Caco-2 (cell line): ENCODE measurements at regions of chr20 and their contacts with region 1.

Region 1: DNA sequence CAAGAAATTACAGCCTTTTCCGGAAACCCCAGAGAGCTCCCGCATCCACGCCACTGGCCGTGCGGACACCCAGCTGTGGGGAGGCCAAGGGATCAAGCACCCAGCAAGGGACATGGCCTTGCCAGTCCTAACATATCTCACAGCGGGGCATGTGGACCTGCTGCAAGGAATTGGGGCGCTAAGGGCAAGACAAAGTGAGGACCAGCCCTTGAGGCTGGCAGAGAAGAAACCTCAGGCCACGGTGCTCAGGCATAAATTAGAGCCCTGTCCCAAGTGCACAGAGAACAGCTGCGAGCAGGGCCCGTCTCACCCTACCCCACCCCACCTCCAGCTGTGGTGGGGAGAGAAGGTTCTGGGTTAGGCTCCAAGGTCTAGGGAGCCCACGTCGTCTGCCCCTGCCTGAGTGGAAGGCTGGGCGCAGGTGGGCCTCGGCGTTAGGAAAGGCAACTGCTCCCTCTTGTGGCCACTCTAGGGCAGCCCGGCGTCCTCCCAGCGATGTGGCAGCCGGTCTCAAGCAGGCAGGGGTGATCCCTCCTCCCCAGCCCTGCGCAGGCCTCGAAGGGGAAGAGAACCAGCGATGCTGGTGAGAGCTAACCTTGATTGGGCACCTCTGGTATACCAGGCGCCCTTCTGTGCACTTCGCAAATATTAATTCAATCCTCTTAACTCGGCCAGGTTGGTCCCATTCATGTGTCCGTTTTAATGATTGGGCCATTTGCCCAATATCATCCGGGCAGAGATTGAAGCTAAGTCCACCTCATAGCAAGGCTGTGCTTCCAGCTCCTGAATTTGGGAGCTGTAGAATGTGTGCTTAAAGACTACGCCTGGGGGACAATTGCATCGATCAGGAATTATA is 235.8 kb downstream of the NFATC2 start:
- DNase-seq: peak; percentile 86 to 91
- H3K4me3 ChIP-seq: no peak overlapping the region
- H3K4me3 Mint-ChIP-seq: no peak overlapping the region
- H3K27ac Mint-ChIP-seq: no peak overlapping the region
- H3K4me1 ChIP-seq: peaks cover 30% of the 10 kb centered on the region
- H3K4me1 Mint-ChIP-seq: peaks cover 27% of the 10 kb centered on the region
- H3K27me3 ChIP-seq: no peaks in the 10 kb centered on the region
- H3K27me3 Mint-ChIP-seq: no peaks in the 10 kb centered on the region
- CTCF ChIP-seq: peak; percentile 99

Region 2: GRCh38 chr20:50992733-50993457 is 313.8 kb before region 1 on chr20:
- CTCF ChIA-PET with region 1: interaction called, 108 read pairs
- POLR2A ChIA-PET with region 1: interaction called, 3 read pairs
- intact Hi-C with region 1: loop called (anchors 1 kb)
- DNase-seq: peak; percentile 88 to 91
- H3K4me3 ChIP-seq: no peak overlapping the region
- H3K4me3 Mint-ChIP-seq: no peak overlapping the region
- H3K27ac Mint-ChIP-seq: no peak overlapping the region
- H3K4me1 ChIP-seq: no peaks in the 10 kb centered on the region
- H3K4me1 Mint-ChIP-seq: peaks cover 16% of the 10 kb centered on the region
- H3K27me3 ChIP-seq: no peaks in the 10 kb centered on the region
- H3K27me3 Mint-ChIP-seq: peaks cover 10% of the 10 kb centered on the region
- CTCF ChIP-seq: peak; percentile 75 to 96

Region 3: GRCh38 chr20:51014797-51015722 is 291.7 kb before region 1 on chr20:
- CTCF ChIA-PET with region 1: interaction called, 7 read pairs
- POLR2A ChIA-PET with region 1: no interaction called
- intact Hi-C with region 1: loop called (anchors 1 kb)
- DNase-seq: peak; percentile 77 to 83
- H3K4me3 ChIP-seq: no peak overlapping the region
- H3K4me3 Mint-ChIP-seq: no peak overlapping the region
- H3K27ac Mint-ChIP-seq: no peak overlapping the region
- H3K4me1 ChIP-seq: no peaks in the 10 kb centered on the region
- H3K4me1 Mint-ChIP-seq: no peaks in the 10 kb centered on the region
- H3K27me3 ChIP-seq: no peaks in the 10 kb centered on the region; the same call in 1 of the 2 replicates
- H3K27me3 Mint-ChIP-seq: peaks cover 7% of the 10 kb centered on the region
- CTCF ChIP-seq: peak; percentile 87

Region 4: GRCh38 chr20:51172974-51173397 is 133.7 kb before region 1 on chr20:
- CTCF ChIA-PET with region 1: no interaction called
- POLR2A ChIA-PET with region 1: no interaction called
- intact Hi-C with region 1: loop called (anchors 2 kb)
- DNase-seq: peak in 1 of 2 experiments; percentile 46
- H3K4me3 ChIP-seq: no peak overlapping the region
- H3K4me3 Mint-ChIP-seq: no peak overlapping the region
- H3K27ac Mint-ChIP-seq: no peak overlapping the region
- H3K4me1 ChIP-seq: no peaks in the 10 kb centered on the region
- H3K4me1 Mint-ChIP-seq: no peaks in the 10 kb centered on the region
- H3K27me3 ChIP-seq: no peaks in the 10 kb centered on the region
- H3K27me3 Mint-ChIP-seq: peaks cover 21% of the 10 kb centered on the region
- CTCF ChIP-seq: no peak

Region 5: GRCh38 chr20:51220293-51220706 is 86.4 kb before region 1 on chr20:
- CTCF ChIA-PET with region 1: no interaction called
- POLR2A ChIA-PET with region 1: no interaction called
- intact Hi-C with region 1: loop called (anchors 2 kb)
- DNase-seq: peak in 1 of 2 experiments; percentile 63
- H3K4me3 ChIP-seq: no peak overlapping the region
- H3K4me3 Mint-ChIP-seq: no peak overlapping the region
- H3K27ac Mint-ChIP-seq: no peak overlapping the region
- H3K4me1 ChIP-seq: peaks cover 12% of the 10 kb centered on the region; the same call in 1 of the 2 replicates
- H3K4me1 Mint-ChIP-seq: peaks cover 18% of the 10 kb centered on the region
- H3K27me3 ChIP-seq: no peaks in the 10 kb centered on the region; the same call in 1 of the 2 replicates
- H3K27me3 Mint-ChIP-seq: no peaks in the 10 kb centered on the region
- CTCF ChIP-seq: peak; percentile 76 to 95